ENCODE measurements at regions of chr2 and their contacts with region 1.

Region 1: DNA sequence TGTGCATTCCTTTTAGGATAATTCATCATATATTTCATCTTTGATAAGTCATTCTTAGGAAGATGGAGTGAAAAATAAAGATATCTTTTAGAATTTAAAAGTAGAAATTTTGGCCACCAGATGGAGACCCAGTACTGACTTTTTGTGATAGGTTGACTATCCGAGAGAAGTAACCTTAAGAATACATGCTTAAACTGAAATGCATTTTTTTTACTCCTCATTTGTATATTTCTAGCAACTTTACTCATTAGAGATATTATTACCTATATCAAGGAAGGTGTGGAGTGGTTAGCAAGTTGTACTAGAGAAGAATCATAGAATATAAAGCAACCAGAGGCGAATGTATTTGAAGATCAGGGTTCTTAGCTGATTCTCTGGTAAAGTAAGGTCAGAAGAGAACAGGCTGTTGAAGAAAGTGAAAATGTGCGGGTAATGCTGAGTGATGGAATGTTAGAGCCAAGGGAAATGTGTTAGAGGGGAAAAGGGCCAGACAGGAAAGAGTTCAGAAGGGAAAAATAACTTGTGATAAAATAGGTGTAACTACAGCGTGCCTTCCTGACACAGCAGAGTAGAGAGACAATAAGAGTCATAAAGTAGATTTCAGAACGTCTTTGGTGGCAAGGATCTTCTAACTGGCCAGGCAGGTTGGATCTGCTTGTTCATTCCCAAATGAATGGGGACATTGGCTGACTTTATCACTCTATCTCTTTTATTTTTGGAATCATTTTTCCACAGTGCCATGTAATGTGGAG is 52.3 kb downstream of the TDRD15 start:
- DNase-seq: no peak
- H3K4me3 ChIP-seq: peak overlapping the region; percentile 22
- H3K27ac ChIP-seq: no peak overlapping the region
- H3K4me1 ChIP-seq: peaks cover 10% of the 10 kb centered on the region
- H3K27me3 ChIP-seq: no peaks in the 10 kb centered on the region
- CTCF ChIP-seq: peak; percentile 61

Region 2: DNA sequence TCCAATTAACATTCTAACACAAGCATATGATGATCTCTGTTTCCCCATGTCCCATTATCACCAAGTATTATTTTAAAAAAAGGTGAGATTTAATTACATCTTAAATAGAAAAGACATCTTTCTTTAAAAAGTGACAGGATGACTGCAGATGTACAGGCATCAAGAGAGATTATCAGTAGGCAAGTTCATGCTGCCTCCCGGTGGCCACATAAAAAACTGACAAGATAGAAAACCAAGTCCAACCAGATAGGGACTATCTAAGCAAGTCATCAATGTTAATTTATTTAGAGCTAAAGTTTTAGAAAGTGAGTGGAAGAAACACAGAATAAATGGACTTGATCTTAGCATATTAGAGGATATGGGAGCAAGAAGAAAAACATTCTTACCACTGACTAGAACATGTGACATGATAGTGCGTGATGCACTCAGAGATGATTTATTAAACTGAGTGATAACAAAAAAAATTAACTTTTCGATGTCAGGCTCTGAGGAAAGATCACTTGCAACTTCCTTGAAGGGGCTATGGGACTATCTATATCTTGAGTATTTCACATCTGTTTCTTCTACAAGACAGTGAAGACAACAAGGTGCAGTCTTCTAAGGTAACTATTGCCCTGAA is 57.7 kb before region 1 on chr2:
- intact Hi-C with region 1: no loop called
- DNase-seq: no peak
- H3K4me3 ChIP-seq: no peak overlapping the region
- H3K27ac ChIP-seq: no peak overlapping the region
- H3K4me1 ChIP-seq: no peaks in the 10 kb centered on the region
- H3K27me3 ChIP-seq: peaks cover 19% of the 10 kb centered on the region
- CTCF ChIP-seq: peak; percentile 68

Region 3: GRCh38 chr2:21318263-21318662 is 142.2 kb after region 1 on chr2:
- intact Hi-C with region 1: loop called (anchors 2 kb)
- DNase-seq: no peak
- H3K4me3 ChIP-seq: no peak overlapping the region
- H3K27ac ChIP-seq: no peak overlapping the region
- H3K4me1 ChIP-seq: no peaks in the 10 kb centered on the region
- H3K27me3 ChIP-seq: no peaks in the 10 kb centered on the region
- CTCF ChIP-seq: no peak

Region 4: GRCh38 chr2:21363364-21363763 is 187.3 kb after region 1 on chr2:
- intact Hi-C with region 1: no loop called
- DNase-seq: no peak
- H3K4me3 ChIP-seq: no peak overlapping the region
- H3K27ac ChIP-seq: no peak overlapping the region
- H3K4me1 ChIP-seq: no peaks in the 10 kb centered on the region
- H3K27me3 ChIP-seq: peaks cover 23% of the 10 kb centered on the region
- CTCF ChIP-seq: no peak

Region 5: GRCh38 chr2:21552981-21553380 is 376.9 kb after region 1 on chr2:
- intact Hi-C with region 1: no loop called
- DNase-seq: no peak
- H3K4me3 ChIP-seq: no peak overlapping the region
- H3K27ac ChIP-seq: no peak overlapping the region
- H3K4me1 ChIP-seq: no peaks in the 10 kb centered on the region
- H3K27me3 ChIP-seq: no peaks in the 10 kb centered on the region
- CTCF ChIP-seq: no peak

Measured in left ventricle myocardium inferior (tissue), 1 donor.